ENCODE measurements at regions of chr9 and their contacts with region 1.

Region 1: DNA sequence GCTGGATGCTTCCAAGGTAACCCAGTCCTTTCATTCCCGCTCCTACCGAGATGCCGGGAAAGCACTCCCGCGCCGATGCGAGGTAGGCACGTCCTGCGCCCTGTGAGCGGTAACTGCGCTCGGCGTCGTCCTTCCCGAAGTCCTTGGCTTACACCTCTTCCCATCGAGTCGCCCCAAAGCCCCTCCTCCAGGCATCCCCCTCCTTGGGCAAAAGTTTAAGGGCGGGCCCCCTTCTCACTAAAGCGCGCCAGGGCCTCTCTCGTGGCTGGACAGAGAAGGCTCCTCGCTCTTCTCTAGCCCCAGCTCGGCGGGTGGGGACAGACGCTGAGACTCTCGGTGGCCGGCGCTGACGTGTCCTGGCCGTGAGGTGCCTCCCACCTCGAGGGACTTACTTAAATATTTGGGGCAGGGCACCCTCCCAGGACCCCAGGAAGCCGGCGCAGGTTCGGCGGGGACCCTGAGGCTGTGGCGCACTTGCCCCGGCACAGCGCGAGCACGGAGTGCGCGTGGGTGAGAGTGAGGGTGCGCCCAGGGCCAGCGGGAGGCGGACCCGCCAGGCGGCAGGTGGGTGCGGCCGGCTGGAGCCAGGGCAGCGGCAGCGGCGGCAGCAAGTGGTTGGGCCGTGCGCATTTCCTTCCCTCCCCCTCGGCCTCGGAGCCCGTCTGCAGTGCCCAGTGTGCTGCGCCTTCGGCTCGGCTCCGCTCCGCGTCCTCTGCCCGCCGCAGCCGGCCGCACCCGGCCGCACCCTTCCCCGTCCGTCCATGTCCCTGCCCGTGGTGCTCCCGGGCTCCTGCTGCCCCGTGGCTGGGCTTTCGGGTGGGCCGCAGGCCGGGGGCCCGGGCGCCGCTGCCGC is at the start of gene ENTREP1:
- DNase-seq: peak; percentile 59
- ATAC-seq: peak; percentile 78
- total RNA-seq, gene ENTREP1: 2.9 TPM

Region 2: GRCh38 chr9:69131682-69132081 is 193.1 kb before region 1 on chr9:
- intact Hi-C with region 1: no loop called
- DNase-seq: no peak
- ATAC-seq: peak; percentile 96

Region 3: DNA sequence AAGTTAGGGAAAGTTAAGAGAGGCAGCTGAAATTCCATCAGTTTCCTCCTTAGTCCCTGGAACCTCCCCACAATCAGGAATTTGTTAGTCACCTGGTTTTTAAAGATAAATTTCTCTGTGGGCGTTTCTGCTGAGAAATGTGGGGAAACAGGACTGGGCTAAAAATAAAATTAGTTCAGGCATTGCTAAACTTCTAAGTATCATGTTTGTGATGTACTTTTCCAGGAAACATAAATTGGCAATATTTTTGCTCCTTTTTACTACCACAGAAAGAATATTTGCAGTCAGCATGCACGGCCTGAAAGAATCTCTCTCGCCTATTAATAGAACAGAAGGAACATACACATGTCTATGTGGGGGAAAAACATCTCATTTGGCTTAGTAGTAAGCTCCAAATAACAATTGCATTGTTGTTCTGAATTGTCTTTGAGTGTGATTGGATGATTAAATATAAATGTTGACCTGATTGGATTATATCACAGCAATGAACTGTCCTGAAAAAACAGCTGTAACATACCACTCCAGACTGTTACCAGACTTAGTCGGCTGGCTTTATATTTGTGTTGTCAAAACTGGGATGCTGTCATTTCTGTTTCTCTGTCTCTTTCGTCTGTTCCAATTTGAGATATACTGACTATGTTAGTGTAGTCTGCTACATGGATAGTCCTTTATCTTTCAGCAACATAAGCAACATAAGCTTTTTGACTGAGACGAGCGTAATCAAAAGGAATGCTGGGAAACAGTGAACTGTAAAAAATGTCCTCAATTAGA is 137.7 kb before region 1 on chr9:
- intact Hi-C with region 1: no loop called
- DNase-seq: no peak
- ATAC-seq: peak; percentile 47

Region 4: DNA sequence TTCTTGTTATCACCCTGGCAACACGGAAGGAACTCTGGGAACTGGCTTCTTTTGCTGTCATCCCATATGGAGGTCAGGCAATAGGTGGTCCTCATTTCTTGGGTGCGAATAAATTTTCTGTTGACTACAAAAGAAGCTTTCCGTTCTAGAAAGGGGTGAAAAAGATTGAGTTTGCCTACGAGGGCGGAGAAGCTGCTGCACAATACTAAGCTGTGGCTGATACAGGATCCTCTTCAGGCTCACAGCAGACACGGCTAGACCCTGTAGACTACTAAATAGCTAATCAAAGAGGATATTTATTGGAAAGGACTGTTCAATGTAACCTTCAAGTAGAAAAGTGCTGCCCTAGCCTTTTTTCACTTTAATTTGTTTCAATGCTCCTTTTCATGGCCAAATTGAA is 92.6 kb before region 1 on chr9:
- intact Hi-C with region 1: no loop called
- DNase-seq: no peak
- ATAC-seq: no peak

Region 5: DNA sequence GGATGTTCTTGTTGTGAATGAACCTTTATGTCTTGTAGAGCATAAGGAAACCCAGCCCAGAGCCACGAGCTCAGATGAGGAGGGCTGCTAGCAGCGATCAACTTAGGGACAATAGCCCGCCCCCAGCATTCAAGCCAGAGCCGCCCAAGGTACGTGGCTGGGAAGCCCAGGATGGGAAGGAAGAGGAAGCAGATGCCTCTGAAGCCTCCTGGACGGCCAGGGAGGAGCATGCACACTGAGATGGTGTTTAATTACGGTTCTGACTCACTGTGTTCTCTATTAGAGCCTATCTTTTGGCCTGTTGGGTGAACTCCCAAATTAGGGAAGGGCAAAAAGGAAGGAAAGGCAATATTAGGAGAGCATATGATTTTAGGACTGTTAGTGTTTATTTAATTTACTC is 75.4 kb before region 1 on chr9:
- intact Hi-C with region 1: loop called (anchors 10 kb)
- DNase-seq: no peak
- ATAC-seq: no peak